ENCODE measurements at regions of chr19 and their contacts with region 1.

Region 1: DNA sequence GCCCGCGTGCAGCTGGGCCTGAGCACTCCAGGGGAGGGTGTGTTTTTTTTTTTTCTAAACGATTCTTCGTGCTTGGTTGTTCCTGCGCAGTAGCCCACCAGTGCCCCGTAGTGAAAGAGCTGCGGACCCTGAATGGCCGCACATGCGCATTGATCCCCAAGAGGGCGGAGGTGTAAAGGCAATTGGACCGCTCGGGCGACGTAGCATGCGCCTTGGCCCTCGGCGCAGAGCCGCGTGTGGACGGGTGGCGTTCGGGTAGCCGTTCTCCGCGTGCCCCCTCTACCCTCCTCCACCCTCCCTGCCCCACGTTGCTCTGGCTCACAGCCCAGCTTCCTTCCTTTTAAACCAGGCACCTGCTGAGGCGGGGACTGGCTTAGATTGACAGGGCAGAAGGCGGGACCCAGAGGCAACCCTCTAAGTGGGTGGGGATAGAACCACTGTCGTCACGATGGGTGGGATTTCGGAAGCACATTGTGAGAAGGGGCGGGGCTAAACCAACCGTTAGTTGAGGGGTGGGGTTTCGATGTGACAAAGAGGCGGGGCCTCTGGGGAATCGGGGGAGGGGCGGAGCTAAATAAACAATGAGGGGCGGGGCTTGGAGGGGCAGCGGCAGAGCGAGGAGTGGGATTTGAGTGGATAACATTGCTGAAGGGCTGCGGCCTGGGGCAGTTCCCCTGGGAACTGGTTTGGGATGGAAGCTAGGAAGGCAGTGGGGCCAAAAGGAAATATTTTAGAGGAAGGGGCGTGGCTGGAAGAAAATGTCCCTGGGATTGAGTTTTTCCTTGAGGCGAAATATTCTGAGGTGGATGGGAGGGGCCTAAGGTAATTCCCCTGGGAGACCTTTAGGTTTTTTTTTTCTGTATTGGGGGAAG is 543 bp upstream of the NUP62 start:
- DNase-seq: peak in 8 of 9 donors; percentile 88 to 97 (median 96)
- ATAC-seq: peak; percentile 92
- H3K4me3 ChIP-seq: peak overlapping the region; percentile 100
- H3K4me3 Mint-ChIP-seq: peak overlapping the region; percentile 95 to 100 (median 97)
- H3K27ac ChIP-seq: peak overlapping the region; percentile 99
- H3K27ac Mint-ChIP-seq: peak overlapping the region; percentile 96 to 99 (median 97)
- H3K4me1 ChIP-seq: peaks cover 34 to 35% of the 10 kb centered on the region in 2 donors
- H3K4me1 Mint-ChIP-seq: peaks cover 46 to 76% (median 68%) of the 10 kb centered on the region in 7 donors
- H3K27me3 ChIP-seq: no peaks in the 10 kb centered on the region
- H3K27me3 Mint-ChIP-seq: peaks cover 0 to 3% (median 0%) of the 10 kb centered on the region in 5 donors

Region 2: DNA sequence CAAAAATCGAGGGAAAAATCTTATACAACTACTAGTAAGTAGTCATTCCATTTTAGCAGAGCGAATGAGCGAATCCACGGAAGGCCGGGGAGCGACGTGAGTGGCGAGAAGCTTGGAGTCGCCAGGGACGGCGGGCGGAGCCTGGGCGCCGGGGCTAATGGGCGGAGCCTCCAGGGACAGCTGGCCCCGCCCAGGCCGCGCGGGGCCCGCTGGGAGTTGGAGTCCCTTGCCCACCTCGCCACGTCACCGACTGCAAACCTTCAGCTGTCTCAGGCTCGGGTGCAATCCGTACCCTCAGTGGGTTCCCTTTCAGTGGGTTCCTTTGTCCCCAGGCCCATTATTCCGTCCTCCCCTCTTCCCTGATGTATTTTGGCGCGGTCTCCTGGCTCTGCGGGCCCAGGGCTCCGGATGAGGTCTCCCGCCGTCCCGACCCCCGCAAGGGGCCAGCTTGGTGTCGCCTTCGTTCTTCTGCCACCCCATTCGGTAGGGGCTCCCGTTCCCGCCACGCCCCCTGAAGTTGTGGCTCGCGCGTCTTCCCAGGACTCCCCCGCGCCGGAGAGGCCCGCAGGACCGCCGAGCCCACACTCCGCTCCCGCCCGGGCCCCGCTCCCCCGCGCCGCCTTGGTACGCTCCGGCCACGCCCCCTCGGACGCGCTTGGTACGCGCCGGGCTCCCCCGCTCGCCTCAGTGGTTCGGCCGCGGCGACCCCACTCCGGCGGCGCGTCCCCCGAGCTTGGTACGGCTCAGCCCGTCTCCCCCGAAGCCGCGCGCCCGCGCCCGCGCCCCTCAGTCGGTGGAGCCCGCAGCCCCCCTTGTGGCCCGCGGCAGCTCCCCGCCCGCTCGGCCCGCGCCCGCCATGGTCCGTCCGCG is 79.1 kb before region 1 on chr19 and contains the start of gene PTOV1:
- CTCF ChIA-PET with region 1: no interaction called
- POLR2A ChIA-PET with region 1: interaction called, 4 read pairs
- intact Hi-C with region 1: loop called (anchors 1 to 2 kb)
- DNase-seq: peak; percentile 78 to 97 (median 88)
- ATAC-seq: peak; percentile 93
- H3K4me3 ChIP-seq: peak within 1 kb of the TSS; percentile 89
- H3K4me3 Mint-ChIP-seq: peak within 1 kb of the TSS; percentile 91 to 96 (median 92)
- H3K27ac ChIP-seq: peak within 1 kb of the TSS; percentile 99
- H3K27ac Mint-ChIP-seq: peak within 1 kb of the TSS; percentile 85 to 98 (median 95)
- H3K4me1 ChIP-seq: peaks cover 7 to 25% of the 10 kb centered on the region in 2 donors
- H3K4me1 Mint-ChIP-seq: peaks cover 22 to 37% (median 33%) of the 10 kb centered on the region in 7 donors
- H3K27me3 ChIP-seq: no peaks in the 10 kb centered on the region
- H3K27me3 Mint-ChIP-seq: peaks cover 0 to 11% (median 0%) of the 10 kb centered on the region in 5 donors
- total RNA-seq, gene PTOV1: 92.8 to 170 (median 160) TPM

Region 3: DNA sequence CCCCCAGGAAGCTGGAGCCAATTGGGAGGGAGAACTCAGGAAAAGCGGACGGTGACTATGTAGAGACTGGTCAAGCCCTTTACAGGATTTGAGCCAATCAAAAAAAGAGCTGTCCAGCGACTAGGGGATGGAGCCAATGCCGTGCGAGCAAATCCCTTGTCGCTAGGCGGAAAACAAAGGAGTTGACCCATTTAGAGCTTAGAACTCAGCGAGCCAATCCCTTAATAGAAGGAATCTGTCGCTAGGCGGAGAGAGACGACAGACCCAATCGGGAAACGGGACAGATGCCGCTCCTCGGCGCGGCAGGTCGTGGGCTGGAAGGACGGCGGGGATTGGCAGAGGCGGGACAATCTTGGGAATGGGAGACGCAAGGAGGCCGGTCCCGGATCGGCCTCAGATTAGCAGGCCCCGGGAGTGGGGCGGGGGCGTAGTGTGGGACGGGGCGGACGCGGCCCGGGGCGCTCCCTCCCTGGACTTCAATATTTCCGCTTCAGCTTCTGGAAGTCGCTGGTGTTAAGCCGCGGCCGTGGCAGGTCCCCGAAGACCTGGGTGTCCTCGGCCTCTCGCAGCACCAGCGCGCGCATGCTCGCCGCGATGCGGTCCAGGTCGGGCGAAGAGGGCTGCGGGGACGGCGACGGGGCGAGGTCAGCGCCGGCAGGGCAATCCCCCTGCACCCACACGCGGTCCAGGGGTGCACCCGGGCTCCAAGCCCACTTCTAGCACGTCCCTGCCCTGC is 60.2 kb before region 1 on chr19:
- CTCF ChIA-PET with region 1: no interaction called
- POLR2A ChIA-PET with region 1: interaction called, 8 read pairs
- intact Hi-C with region 1: loop called in 1 of 2 experiments (anchors 2 kb)
- DNase-seq: peak; percentile 83 to 94 (median 87)
- ATAC-seq: peak; percentile 87
- H3K4me3 ChIP-seq: peak overlapping the region; percentile 58
- H3K4me3 Mint-ChIP-seq: peak overlapping the region in 2 of 10 donors; percentile 87
- H3K27ac ChIP-seq: peak overlapping the region; percentile 72
- H3K27ac Mint-ChIP-seq: peak overlapping the region in 5 of 9 donors; percentile 59 to 87 (median 74)
- H3K4me1 ChIP-seq: peaks cover 31 to 38% of the 10 kb centered on the region in 2 donors
- H3K4me1 Mint-ChIP-seq: peaks cover 25 to 51% (median 45%) of the 10 kb centered on the region in 7 donors
- H3K27me3 ChIP-seq: no peaks in the 10 kb centered on the region
- H3K27me3 Mint-ChIP-seq: no peaks in the 10 kb centered on the region

Region 4: DNA sequence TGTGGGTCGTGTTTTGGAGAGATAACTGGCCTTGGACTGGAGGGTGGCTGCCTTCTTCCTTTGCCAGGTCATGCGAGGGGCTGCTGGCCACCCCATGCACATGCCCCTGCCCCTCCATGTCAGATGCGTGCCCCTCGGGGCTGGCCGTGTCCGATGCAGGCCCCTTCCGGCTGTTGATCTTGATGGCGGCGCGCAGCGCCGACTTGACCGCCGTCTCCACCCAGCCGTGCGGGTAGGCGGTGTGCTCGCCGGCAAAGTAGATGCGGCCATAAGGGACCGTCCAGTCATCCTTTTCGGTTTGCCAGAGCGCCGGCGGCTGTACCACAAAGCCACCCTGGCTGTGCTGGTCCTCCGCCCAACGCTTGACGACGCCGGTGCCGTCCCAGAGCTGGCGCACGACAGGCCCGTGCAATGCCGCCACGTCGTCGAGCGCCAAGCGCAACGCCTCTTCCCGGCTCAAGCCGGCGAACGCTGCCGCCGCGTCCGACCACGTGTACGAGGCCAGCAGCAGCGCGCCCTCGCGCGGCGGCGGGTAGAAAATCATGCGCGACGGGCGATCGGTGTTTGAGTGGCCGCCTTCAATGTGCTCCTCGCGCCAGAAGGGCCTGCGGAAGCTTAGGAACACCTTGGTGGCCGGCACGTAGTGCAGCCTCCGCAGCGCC is 40.0 kb before region 1 on chr19:
- CTCF ChIA-PET with region 1: no interaction called
- POLR2A ChIA-PET with region 1: interaction called, 6 read pairs
- intact Hi-C with region 1: loop called in 1 of 2 experiments (anchors 1 kb)
- DNase-seq: peak; percentile 56 to 81 (median 75)
- ATAC-seq: peak; percentile 87
- H3K4me3 ChIP-seq: peak overlapping the region; percentile 69
- H3K4me3 Mint-ChIP-seq: peak overlapping the region; percentile 70 to 84 (median 79)
- H3K27ac ChIP-seq: no peak overlapping the region
- H3K27ac Mint-ChIP-seq: peak overlapping the region in 5 of 9 donors; percentile 25 to 79 (median 51)
- H3K4me1 ChIP-seq: peaks cover 0 to 5% of the 10 kb centered on the region in 2 donors
- H3K4me1 Mint-ChIP-seq: peaks cover 0 to 16% (median 3%) of the 10 kb centered on the region in 7 donors
- H3K27me3 ChIP-seq: no peaks in the 10 kb centered on the region
- H3K27me3 Mint-ChIP-seq: no peaks in the 10 kb centered on the region

Region 5: GRCh38 chr19:49896863-49897621 is 32.8 kb before region 1 on chr19 and contains the start of gene IL4I1:
- CTCF ChIA-PET with region 1: interaction called, 3 read pairs
- POLR2A ChIA-PET with region 1: interaction called, 8 read pairs
- intact Hi-C with region 1: loop called (anchors 1 kb)
- DNase-seq: peak in 8 of 9 donors; percentile 15 to 62 (median 38)
- ATAC-seq: peak; percentile 72
- H3K4me3 ChIP-seq: peak within 1 kb of the TSS; percentile 36
- H3K4me3 Mint-ChIP-seq: peak within 1 kb of the TSS; percentile 26 to 81 (median 74)
- H3K27ac ChIP-seq: peak within 1 kb of the TSS; percentile 56
- H3K27ac Mint-ChIP-seq: peak within 1 kb of the TSS; percentile 79 to 97 (median 91)
- H3K4me1 ChIP-seq: peaks cover 18 to 19% of the 10 kb centered on the region in 2 donors
- H3K4me1 Mint-ChIP-seq: peaks cover 15 to 41% (median 23%) of the 10 kb centered on the region in 7 donors
- H3K27me3 ChIP-seq: no peaks in the 10 kb centered on the region
- H3K27me3 Mint-ChIP-seq: no peaks in the 10 kb centered on the region
- total RNA-seq, gene IL4I1: 1.2 to 6.8 (median 1.9) TPM

Region 6: DNA sequence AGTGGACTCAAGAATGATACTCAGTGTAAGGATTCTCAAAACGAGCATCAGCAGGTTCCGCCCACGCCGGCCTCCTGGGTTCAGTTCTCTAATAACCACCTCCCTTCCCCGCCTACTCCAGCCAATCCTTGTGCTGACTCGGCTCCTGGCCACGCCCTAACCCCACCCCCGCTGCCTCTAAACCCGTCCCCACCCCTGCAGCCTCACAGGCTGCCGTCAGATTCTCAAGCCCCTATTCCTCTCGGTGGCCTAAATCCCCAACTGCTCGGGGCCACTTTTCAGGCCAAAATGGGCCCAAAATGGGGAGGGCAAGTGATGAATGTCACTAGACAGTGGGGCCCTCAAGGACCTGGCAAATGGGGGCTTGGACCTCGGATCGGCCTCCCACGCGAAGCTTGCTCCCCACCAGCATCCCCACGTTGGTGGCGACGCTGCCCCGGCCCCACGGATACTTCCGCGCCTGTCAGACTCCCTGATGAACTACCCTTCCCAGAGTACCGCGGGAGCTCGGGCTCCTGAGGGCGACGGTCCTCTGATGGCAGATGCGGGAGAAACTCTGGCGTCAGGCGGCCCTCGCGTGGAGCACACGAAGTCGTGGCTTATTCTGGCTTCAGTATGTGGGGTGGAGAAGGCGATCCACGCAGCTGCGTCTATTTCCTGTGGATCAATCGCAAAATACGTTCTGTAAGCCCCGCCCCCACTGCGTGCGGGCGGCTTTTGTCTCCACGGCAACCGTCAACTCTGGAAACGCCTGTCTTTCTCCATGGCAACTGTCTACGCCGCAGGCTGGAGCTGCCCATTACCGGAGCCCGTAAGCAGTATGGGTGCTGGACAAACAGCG is 120.8 kb after region 1 on chr19:
- CTCF ChIA-PET with region 1: no interaction called
- POLR2A ChIA-PET with region 1: no interaction called
- intact Hi-C with region 1: loop called in 1 of 2 experiments (anchors 1 kb)
- DNase-seq: peak; percentile 58 to 86 (median 79)
- ATAC-seq: peak; percentile 90
- H3K4me3 ChIP-seq: peak overlapping the region; percentile 85
- H3K4me3 Mint-ChIP-seq: peak overlapping the region; percentile 78 to 99 (median 90)
- H3K27ac ChIP-seq: peak overlapping the region; percentile 85
- H3K27ac Mint-ChIP-seq: peak overlapping the region; percentile 73 to 97 (median 89)
- H3K4me1 ChIP-seq: peaks cover 0 to 13% of the 10 kb centered on the region in 2 donors
- H3K4me1 Mint-ChIP-seq: peaks cover 5 to 20% (median 14%) of the 10 kb centered on the region in 7 donors
- H3K27me3 ChIP-seq: no peaks in the 10 kb centered on the region
- H3K27me3 Mint-ChIP-seq: peaks cover 0 to 6% (median 0%) of the 10 kb centered on the region in 5 donors

Region 7: GRCh38 chr19:50329146-50329925 is 399.5 kb after region 1 on chr19 and contains the start of gene KCNC3:
- CTCF ChIA-PET with region 1: no interaction called
- POLR2A ChIA-PET with region 1: no interaction called
- intact Hi-C with region 1: loop called in 1 of 2 experiments (anchors 5 kb)
- DNase-seq: peak in 8 of 9 donors; percentile 69 to 96 (median 86)
- ATAC-seq: peak; percentile 77
- H3K4me3 ChIP-seq: peak within 1 kb of the TSS; percentile 39
- H3K4me3 Mint-ChIP-seq: peak within 1 kb of the TSS; percentile 72 to 97 (median 86)
- H3K27ac ChIP-seq: no peak within 1 kb of the TSS
- H3K27ac Mint-ChIP-seq: peak within 1 kb of the TSS; percentile 55 to 96 (median 87)
- H3K4me1 ChIP-seq: peaks cover 42 to 62% of the 10 kb centered on the region in 2 donors
- H3K4me1 Mint-ChIP-seq: peaks cover 43 to 75% (median 73%) of the 10 kb centered on the region in 7 donors
- H3K27me3 ChIP-seq: peaks cover 15 to 28% of the 10 kb centered on the region in 2 donors
- H3K27me3 Mint-ChIP-seq: peaks cover 20 to 62% (median 41%) of the 10 kb centered on the region in 5 donors
- total RNA-seq, gene KCNC3: 1.9 to 11.1 (median 2.4) TPM